Left ventricle myocardium inferior (tissue), 1 donor: ENCODE measurements at regions of chr3 and their contacts with region 1.

Region 1: DNA sequence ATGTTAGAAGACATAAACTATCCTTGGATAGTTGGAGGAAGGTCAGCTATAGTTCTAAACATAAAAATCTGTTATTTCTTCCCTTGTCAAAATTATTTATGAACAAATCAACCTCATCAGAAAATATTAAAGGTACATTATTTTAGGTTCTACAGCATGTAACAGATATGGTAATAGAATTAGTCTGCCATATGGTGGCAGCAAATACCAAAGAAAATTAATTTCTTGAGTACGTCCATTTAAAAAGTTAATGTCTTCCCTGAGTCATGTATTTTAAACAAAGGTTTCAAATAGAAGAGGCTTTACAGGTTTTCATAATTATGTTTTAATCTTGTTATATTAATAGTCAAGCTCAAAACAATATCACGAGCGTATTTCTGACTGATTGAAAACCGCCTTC is 17.9 kb upstream of the ANKRD28 start:
- DNase-seq: no peak
- H3K4me3 ChIP-seq: no peak overlapping the region
- H3K27ac ChIP-seq: no peak overlapping the region
- H3K4me1 ChIP-seq: peaks cover 15% of the 10 kb centered on the region
- H3K27me3 ChIP-seq: no peaks in the 10 kb centered on the region
- CTCF ChIP-seq: peak; percentile 63

Region 2: GRCh38 chr3:15578289-15578867 is 237.3 kb before region 1 on chr3:
- intact Hi-C with region 1: no loop called
- DNase-seq: no peak
- H3K4me3 ChIP-seq: no peak overlapping the region
- H3K27ac ChIP-seq: no peak overlapping the region
- H3K4me1 ChIP-seq: peaks cover 4% of the 10 kb centered on the region
- H3K27me3 ChIP-seq: no peaks in the 10 kb centered on the region
- CTCF ChIP-seq: no peak

Region 3: DNA sequence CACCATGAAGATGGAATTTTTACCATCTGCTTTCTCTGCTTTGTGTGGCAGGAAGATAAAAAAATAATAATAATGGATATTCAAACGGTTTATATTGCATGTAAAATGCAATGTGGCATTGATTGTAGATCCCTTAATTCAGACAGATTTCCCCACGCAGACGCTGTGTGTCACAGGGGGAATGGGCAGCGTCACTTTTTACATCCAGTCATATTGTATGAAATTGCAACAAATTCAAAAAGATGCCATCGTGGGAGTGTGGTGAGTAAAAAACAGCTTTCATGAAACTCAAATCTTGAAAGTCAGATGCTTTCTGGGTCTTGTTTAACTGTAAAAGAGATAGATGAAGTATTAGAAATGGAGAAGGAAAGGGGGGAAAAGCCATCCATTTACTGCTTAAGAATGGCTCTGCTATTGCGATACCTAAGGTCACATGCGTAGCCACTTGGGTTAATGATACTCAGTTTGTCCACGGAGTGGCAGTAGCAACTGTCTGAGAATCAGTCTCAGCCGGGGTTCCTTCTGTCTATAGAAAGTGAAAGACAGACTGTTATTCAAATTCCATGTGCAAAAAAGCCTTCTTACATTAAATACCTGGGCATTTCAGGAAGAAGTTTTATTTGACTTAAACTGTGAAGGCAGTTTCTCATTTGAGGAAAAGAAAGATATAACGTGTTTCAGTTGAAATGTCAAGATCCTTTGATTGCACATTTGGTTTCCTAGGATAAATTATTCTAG is 185.7 kb before region 1 on chr3:
- intact Hi-C with region 1: loop called (anchors 5 kb)
- DNase-seq: no peak
- H3K4me3 ChIP-seq: peak overlapping the region; percentile 49
- H3K27ac ChIP-seq: peak overlapping the region; percentile 36
- H3K4me1 ChIP-seq: peaks cover 29% of the 10 kb centered on the region
- H3K27me3 ChIP-seq: no peaks in the 10 kb centered on the region
- CTCF ChIP-seq: peak; percentile 86